ENCODE measurements at regions of chr1 and their contacts with region 1.

Region 1: DNA sequence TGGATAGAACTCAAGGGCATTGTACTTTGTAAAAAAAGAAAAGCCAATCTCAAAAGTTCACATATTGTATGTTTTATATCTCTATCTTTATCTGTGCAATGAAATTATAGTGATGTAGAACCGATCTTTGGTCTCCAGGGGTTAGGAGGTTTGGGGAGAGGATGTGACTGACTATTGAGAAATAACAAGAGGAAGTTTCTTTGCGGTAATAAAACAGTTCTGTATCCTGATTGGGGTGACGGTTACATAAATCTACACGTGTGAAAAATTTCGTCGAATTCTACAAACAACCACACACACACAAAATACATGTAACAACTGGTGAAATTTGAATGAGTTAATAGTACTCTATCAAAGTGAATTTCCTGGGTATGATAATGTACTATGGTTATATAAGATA is 10.6 kb upstream of the OR2T33 start:
- DNase-seq: no peak
- H3K4me3 ChIP-seq: no peak overlapping the region
- CTCF ChIP-seq: no peak

Region 2: DNA sequence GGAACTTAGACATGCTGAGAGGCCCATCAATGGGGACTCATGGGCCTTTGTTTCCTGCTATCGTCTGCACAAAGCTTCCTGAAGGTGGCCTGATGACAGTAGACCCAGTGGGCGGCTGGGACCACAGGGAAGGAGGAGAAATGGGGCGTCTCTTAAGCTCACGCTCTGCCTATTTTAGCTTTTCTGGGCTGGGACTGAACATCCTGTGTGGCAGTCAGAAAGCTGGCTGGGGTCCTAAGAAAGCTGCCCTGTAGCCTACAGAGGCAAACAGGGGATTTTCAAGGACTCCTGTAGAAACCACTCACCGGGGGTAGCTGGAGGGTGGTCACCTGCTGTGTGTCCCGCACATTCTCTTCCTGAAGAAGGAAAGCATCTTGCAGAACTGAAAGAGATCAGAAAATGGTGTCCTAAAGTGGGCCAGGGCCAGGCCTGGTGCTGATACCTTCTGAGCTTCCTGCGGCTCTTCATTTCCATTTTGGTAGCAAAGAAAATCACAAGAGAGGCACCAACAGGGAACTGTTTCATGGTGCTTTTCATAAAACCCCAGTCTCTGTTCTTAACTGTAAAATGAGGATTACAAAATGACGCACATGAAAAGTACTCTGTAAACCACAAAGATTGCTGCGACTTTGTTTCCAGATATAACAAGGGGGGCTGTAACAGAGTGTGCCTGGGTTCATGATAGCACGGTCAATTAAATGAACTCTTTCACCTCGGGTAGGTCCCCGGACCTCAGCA is 965.4 kb before region 1 on chr1:
- in situ Hi-C with region 1: no loop called
- DNase-seq: no peak
- H3K4me3 ChIP-seq: no peak overlapping the region
- CTCF ChIP-seq: no peak

Region 3: GRCh38 chr1:248231117-248231516 is 57.3 kb before region 1 on chr1 and contains the start of gene OR2M4:
- in situ Hi-C with region 1: loop called (anchors 5 kb)
- DNase-seq: no peak
- H3K4me3 ChIP-seq: no peak within 1 kb of the TSS
- CTCF ChIP-seq: no peak

Region 4: GRCh38 chr1:248372394-248372793 is 84.0 kb after region 1 on chr1:
- in situ Hi-C with region 1: no loop called
- DNase-seq: no peak
- H3K4me3 ChIP-seq: no peak overlapping the region
- CTCF ChIP-seq: no peak

Measured in astrocyte of the cerebellum (primary cell).